ENCODE measurements at regions of chr1 and their contacts with region 1.

Region 1: GRCh38 chr1:111222308-111223125 is 5.0 kb upstream of the CHI3L2 start:
- DNase-seq: peak; percentile 88

Region 2: GRCh38 chr1:110756506-110756905 is 466.0 kb before region 1 on chr1:
- intact Hi-C with region 1: no loop called
- DNase-seq: no peak

Region 3: DNA sequence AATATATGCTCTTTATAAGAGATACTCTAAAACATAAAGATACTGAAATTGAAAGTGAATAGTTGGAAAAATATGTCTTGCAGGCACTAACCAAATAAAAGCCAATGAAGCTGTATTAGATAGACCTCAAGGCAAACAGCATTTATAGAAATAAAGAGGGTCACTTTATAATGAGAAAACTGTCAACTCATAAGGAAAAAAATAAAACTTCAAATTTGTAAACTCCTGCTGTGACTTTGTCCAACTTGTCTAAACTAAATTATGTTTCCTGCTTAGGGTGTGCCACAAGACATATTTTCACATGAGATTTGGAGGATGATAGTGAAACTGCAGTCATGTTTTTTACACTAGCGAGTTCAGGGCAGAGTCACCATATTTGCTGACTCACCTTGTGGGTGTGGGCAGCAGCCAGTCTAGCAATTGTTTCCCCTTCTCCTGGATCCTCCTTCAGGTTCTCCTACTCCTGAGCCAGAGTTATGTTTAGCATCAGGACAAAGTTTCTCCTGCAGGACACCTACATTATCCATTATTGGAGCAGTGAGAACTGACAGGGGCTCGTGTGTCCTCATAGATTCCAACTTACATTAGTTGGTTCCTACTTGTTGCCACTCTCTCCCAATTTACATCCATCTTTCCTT is 305.7 kb before region 1 on chr1:
- intact Hi-C with region 1: no loop called
- DNase-seq: no peak

Region 4: GRCh38 chr1:111030590-111030989 is 191.9 kb before region 1 on chr1:
- intact Hi-C with region 1: no loop called
- DNase-seq: no peak

Region 5: DNA sequence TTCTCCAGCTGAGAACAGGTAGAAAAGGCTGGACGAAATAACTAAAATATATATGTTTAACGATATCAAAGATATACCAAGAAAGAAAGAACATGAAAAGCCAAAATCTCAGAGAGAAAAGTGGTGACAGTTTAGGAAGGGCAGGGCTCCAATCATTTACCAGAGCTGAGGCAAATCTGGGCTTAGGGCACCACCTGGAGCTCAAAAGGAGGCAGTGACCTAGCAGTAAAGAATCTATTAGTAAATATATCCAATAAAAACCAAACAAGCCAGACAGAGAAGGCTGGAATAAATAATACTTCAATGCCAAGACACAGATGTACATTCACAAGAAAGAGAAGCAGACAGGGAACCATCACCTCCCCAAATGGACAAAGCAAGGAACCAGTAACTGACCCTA is 111.7 kb after region 1 on chr1:
- intact Hi-C with region 1: loop called (anchors 1 kb)
- DNase-seq: no peak

Region 6: DNA sequence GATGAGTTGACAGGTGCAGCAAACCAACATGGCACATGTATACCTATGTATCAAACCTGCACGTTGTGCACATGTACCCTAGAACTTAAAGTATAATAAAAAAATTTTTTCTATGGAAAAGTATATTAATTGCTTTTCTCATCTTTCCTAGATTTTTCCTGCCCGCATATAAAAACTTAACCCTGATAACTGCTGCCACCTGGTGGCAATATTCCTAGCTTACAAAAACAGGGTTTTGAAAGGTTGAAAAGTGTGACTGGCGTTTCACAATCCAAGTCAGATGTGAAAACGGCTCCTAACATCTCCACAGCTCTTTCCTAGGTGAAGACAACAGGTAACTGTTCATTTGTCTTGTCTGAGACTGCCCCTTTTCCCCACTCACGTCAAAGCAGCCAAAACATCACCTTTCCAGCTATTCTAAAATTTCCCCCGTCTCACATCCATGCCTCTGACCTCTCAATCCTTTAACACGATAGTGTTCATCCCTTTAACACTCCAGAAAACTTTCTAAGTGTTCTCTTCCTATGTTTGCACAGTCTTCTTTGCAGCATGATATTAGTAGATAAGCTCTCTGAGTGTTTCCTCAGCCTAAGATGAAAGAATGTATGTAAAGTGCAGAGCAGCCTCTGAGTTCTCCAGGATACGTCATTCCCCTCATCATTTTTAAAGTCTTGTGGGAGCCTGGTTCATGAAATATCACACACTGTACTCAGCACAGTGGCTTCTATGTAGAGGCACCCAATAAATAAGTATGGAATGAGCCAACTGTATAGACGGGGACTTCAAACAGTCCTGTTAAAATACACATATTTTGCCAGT is 177.5 kb after region 1 on chr1:
- intact Hi-C with region 1: loop called (anchors 2 kb)
- DNase-seq: no peak

Region 7: GRCh38 chr1:111656086-111657017 is 433.8 kb after region 1 on chr1:
- intact Hi-C with region 1: loop called (anchors 10 kb)
- DNase-seq: no peak

Region 8: GRCh38 chr1:111769517-111770146 is 547.1 kb after region 1 on chr1:
- intact Hi-C with region 1: loop called (anchors 10 kb)
- DNase-seq: no peak

Region 9: GRCh38 chr1:112172294-112172882 is 949.9 kb after region 1 on chr1:
- intact Hi-C with region 1: no loop called
- DNase-seq: no peak